K562 (cell line): ENCODE measurements at regions of chr1 and their contacts with region 1.

Region 1: GRCh38 chr1:45490626-45491486 is at the start of gene TESK2:
- DNase-seq: peak; percentile 89 to 95 (median 92)
- ATAC-seq: peak; percentile 93
- H3K4me3 ChIP-seq: peak within 1 kb of the TSS; percentile 57
- H3K27ac ChIP-seq: peak within 1 kb of the TSS; percentile 52
- H3K4me1 ChIP-seq: peaks cover 9 to 20% of the 10 kb centered on the region in 2 experiments; a peak in 4 of 5 replicates
- H3K27me3 ChIP-seq: no peaks in the 10 kb centered on the region
- CTCF ChIP-seq: 0 out of 6 replicates have a peak, but pooled peaks of 2 of the 3 experiments have one; percentile 5
- EP300 ChIP-seq: no peak
- POLR2A ChIP-seq: peak; percentile 72
- RAD21 ChIP-seq: 0 out of 4 replicates have a peak, but pooled peaks of 1 of the 2 experiments have one; percentile 7
- polyA plus RNA-seq, gene TESK2: 1.6 to 1.9 TPM

Region 2: DNA sequence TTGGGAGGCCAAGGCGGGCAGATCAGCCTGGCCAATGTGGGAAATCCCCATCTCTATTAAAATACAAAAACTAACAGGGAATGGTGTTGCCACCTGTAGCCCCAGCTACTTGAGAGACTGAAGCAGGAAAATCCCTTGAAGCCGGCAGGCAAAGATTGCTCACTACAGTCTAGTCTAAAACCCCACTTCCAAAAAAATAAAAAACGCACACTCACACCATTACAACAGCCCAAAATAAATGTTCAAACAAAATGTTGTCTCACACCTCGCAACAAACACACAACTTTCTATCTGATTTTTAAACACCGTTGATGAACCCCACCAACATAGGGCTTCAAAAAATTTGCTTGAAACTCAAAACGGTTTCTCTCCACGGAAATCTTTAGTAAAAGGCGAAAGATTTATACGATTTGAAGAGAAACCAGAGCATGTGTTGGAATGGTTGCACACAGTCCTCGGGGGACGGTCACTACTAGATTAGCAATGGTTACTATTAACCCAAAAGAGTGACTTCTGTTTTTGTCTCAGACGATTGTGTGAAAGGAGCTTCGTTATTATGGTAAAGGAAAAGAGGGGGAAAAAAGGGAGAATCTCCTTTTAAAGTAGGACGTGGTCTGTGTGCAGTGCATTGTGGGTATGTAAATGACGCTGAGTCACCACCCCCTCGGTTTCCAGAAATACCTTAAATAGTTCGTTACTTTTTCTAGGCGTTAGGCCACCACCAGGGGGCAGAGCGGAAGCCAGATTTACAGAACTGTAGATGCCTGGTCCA is 759.9 kb before region 1 on chr1 and contains the start of gene RNU5D-1:
- CTCF ChIA-PET with region 1: interaction called, 4 read pairs
- POLR2A ChIA-PET with region 1: interaction called, 3 read pairs
- in situ Hi-C with region 1: no loop called
- intact Hi-C with region 1: loop called (anchors 5 kb)
- DNase-seq: peak; percentile 87 to 99 (median 90)
- ATAC-seq: peak; percentile 87
- H3K4me3 ChIP-seq: 0 out of 2 replicates have a peak within 1 kb of the TSS, but pooled peaks have one; percentile 3
- H3K27ac ChIP-seq: peak within 1 kb of the TSS; percentile 100
- H3K4me1 ChIP-seq: peaks cover 11 to 16% of the 10 kb centered on the region in 2 experiments
- H3K27me3 ChIP-seq: no peaks in the 10 kb centered on the region
- CTCF ChIP-seq: peak; percentile 79 to 97 (median 93)
- EP300 ChIP-seq: peak; percentile 80
- POLR2A ChIP-seq: peak; percentile 100
- RAD21 ChIP-seq: peak; percentile 4 to 54
- polyA plus RNA-seq, gene RNU5D-1: not detected

Region 3: DNA sequence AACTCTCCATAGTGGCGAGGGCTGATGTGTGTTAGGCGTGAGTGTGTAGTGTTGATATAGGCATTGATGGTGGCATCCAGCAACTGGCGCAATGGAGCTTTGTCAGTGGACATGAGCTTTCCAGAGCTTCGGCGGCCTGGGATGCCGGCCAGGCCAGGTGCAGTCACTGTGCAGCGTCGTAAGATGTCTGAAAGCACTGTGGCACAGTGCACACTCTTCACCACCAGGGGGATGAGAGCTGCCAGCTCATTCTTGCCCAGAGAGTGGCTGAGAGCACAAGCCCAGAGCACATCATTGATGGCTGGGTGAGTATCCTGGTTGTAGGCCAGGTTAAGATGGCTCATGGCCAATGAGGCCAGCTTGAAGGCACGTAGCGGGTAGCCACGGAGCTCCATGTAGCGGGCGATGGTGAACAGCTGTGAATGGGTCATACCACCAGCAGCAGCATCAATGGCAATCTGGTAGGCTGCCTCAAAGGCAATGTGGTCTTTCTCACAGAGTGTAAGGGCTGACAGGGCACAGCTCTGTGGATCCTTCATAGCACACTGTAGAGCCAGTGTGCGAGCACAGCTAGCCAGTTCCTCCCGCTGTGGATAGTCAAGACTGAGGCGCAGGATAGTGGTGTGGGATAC is 472.1 kb before region 1 on chr1:
- CTCF ChIA-PET with region 1: interaction called, 22 read pairs
- POLR2A ChIA-PET with region 1: interaction called, 3 read pairs
- in situ Hi-C with region 1: loop called (anchors 5 kb)
- intact Hi-C with region 1: loop called (anchors 2 kb)
- DNase-seq: peak; percentile 48 to 77 (median 53)
- ATAC-seq: peak; percentile 81
- H3K4me3 ChIP-seq: no peak overlapping the region
- H3K27ac ChIP-seq: no peak overlapping the region
- H3K4me1 ChIP-seq: peaks cover 22 to 23% of the 10 kb centered on the region in 2 experiments; a peak in 4 of 5 replicates
- H3K27me3 ChIP-seq: no peaks in the 10 kb centered on the region
- CTCF ChIP-seq: peak; percentile 78 to 86 (median 85)
- EP300 ChIP-seq: no peak
- POLR2A ChIP-seq: no peak
- RAD21 ChIP-seq: peak; percentile 74 to 90

Region 4: DNA sequence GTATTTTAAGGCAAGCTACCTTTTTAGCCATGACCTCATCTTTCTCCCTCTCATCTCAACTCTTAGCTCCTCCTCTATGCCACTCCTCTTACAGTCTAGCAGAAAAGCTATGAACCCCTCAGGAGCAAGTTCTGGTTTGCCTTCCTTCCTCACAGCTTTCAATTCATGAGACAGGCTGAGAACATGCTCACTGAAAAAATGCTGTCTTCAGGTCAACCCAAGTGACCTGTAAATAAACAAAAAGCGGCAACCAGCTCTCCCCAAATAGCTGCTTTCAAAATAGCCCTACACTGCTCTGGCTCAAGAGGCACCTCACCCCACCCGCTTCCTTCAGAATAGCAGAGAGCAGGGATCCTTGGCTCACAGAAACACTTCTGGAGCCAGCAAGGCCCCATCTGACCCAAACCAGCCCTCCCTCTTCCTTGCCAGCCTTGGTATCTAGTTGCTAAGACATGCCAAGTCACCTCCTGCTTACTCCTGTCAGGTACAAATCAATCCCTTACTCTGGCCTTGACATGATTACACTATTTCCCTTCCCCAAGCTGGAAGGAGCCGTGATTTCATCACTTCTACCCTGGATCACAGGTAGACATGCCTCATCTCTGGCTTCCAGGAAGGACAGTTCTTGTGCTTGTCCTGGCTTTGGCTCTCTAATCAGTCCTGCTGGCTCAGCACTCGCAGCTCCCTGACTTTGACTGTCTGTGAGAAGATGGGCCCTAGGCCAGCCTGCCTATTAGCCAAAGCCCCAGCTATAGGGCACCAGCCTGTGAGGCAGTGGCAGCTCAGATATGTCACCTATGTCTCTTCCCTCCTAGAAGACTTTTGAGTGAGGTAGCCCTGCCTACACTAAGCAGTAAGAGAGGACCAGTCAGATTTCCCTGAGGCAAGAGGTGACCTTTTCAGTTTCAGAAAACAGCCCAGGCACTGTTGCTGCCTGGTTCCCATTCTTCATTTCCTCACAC is 141.9 kb before region 1 on chr1:
- CTCF ChIA-PET with region 1: no interaction called
- POLR2A ChIA-PET with region 1: interaction called, 7 read pairs
- in situ Hi-C with region 1: loop called (anchors 5 kb)
- intact Hi-C with region 1: loop called (anchors 5 kb)
- DNase-seq: no peak
- ATAC-seq: no peak
- H3K4me3 ChIP-seq: no peak overlapping the region
- H3K27ac ChIP-seq: no peak overlapping the region
- H3K4me1 ChIP-seq: peaks cover 4 to 5% of the 10 kb centered on the region in 2 experiments; a peak in 3 of 5 replicates
- H3K27me3 ChIP-seq: no peaks in the 10 kb centered on the region
- CTCF ChIP-seq: no peak
- EP300 ChIP-seq: no peak
- POLR2A ChIP-seq: no peak
- RAD21 ChIP-seq: no peak

Region 5: GRCh38 chr1:45430490-45430889 is 60.4 kb before region 1 on chr1:
- CTCF ChIA-PET with region 1: no interaction called
- POLR2A ChIA-PET with region 1: no interaction called
- in situ Hi-C with region 1: no loop called
- intact Hi-C with region 1: loop called (anchors 5 kb)
- DNase-seq: no peak
- ATAC-seq: no peak
- H3K4me3 ChIP-seq: no peak overlapping the region
- H3K27ac ChIP-seq: no peak overlapping the region
- H3K4me1 ChIP-seq: peaks cover 5 to 12% of the 10 kb centered on the region in 2 experiments; a peak in 4 of 5 replicates
- H3K27me3 ChIP-seq: no peaks in the 10 kb centered on the region
- CTCF ChIP-seq: no peak
- EP300 ChIP-seq: no peak
- POLR2A ChIP-seq: no peak
- RAD21 ChIP-seq: no peak

Region 6: DNA sequence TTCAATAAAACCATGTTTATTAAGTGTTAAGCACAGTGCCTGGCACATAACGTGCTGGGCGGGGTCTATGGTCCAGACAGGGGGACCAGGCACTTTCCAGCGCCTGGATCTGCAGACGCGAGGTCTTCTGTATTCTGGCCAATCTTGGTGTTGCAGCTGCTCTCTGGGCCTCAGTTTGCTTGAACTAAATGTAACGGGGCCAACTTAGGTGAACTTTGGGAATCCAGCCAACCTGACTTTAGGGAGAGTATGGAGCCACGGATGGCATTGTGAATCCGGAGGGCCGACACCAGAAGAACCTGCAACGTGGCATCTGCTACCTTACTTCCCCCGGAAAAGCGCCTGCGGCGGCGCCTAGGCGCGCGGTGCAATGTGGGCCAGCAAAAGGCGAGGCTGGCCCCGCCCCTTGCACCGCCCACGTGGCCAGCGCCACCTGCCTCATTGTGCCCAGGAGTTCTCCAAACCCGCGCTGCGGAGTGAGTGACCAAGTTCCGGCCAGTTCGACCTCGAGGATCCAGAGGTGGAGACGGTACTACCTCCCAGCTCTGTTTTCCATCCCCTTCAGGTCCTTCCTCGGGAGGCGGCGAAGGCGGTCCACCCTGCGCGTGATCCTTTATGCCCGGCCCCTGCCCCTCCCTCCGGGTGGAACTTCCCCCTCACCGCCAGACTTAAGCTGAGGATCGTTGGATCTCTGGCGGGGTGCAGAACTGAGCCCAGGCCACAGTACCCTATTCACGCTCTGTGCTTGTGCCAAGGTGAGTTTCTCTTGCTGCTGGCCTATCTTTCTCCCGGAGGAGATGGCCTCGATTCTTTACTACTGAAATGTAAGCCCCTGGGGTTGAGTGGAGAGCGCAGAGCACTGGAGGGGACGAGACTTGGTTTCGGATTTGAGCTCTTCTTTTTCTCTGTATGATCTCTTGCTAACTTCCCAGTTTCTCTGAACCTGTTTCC is 59.8 kb after region 1 on chr1 and contains the start of gene AKR1A1:
- CTCF ChIA-PET with region 1: no interaction called
- POLR2A ChIA-PET with region 1: no interaction called
- in situ Hi-C with region 1: no loop called
- intact Hi-C with region 1: no loop called
- DNase-seq: peak; percentile 90 to 97 (median 92)
- ATAC-seq: peak; percentile 98
- H3K4me3 ChIP-seq: peak within 1 kb of the TSS; percentile 72
- H3K27ac ChIP-seq: peak within 1 kb of the TSS; percentile 92
- H3K4me1 ChIP-seq: peaks cover 10 to 17% of the 10 kb centered on the region in 2 experiments; a peak in 3 of 5 replicates
- H3K27me3 ChIP-seq: no peaks in the 10 kb centered on the region; a peak in 1 of 5 replicates
- CTCF ChIP-seq: peak in 2 of 3 experiments; percentile 4 to 11; a peak in 1 of 6 replicates
- EP300 ChIP-seq: peak; percentile 21; the same call in 1 of the 2 replicates
- POLR2A ChIP-seq: peak; percentile 96
- RAD21 ChIP-seq: peak in 1 of 2 experiments; percentile 15; a peak in 1 of 4 replicates
- polyA plus RNA-seq, gene AKR1A1: 68.6 to 114 TPM

Region 7: DNA sequence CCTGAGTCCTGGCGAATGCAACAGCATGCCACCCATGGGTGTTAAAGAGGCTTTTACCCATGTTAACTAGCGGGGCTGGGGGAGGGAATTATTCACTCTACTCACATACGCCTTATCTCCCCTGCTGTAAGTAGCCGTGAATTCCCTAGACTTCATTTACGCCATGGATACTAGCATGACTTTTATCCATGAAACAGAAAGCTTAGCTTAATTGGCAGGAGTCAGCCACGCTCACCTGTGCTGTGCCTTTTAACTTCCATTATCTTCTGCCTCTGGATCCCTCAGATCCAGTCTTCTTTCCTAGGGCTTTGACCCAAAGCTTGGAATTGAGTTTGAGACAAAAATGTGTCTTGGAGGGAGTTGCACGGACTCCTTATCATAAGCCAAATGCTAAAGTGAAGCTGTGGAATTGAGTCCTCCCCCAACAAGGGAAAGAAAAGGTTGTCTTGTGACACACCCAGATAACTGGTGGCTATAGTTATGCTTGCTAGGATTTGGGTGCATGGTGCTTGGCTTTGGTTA is 83.3 kb after region 1 on chr1:
- CTCF ChIA-PET with region 1: no interaction called
- POLR2A ChIA-PET with region 1: no interaction called
- in situ Hi-C with region 1: no loop called
- intact Hi-C with region 1: no loop called
- DNase-seq: peak; percentile 44 to 83 (median 54)
- ATAC-seq: peak; percentile 79
- H3K4me3 ChIP-seq: no peak overlapping the region; the same call in 1 of the 2 replicates
- H3K27ac ChIP-seq: peak overlapping the region; percentile 64
- H3K4me1 ChIP-seq: peaks cover 11 to 22% of the 10 kb centered on the region in 2 experiments
- H3K27me3 ChIP-seq: no peaks in the 10 kb centered on the region
- CTCF ChIP-seq: no peak
- EP300 ChIP-seq: peak; percentile 43
- POLR2A ChIP-seq: no peak
- RAD21 ChIP-seq: no peak